ENCODE measurements at regions of chr16 and their contacts with region 1.

Region 1: GRCh38 chr16:26430618-26431017 is 636.1 kb upstream of the C16orf82 start:
- DNase-seq: no peak
- ATAC-seq: no peak
- H3K4me3 ChIP-seq: no peak overlapping the region
- H3K27ac ChIP-seq: no peak overlapping the region
- H3K4me1 ChIP-seq: no peaks in the 10 kb centered on the region
- H3K27me3 ChIP-seq: no peaks in the 10 kb centered on the region
- CTCF ChIP-seq: no peak

Region 2: GRCh38 chr16:26475596-26475995 is 45.0 kb after region 1 on chr16:
- intact Hi-C with region 1: loop called in 1 of 2 experiments (anchors 5 kb)
- DNase-seq: no peak
- ATAC-seq: no peak
- H3K4me3 ChIP-seq: no peak overlapping the region
- H3K27ac ChIP-seq: no peak overlapping the region
- H3K4me1 ChIP-seq: no peaks in the 10 kb centered on the region
- H3K27me3 ChIP-seq: no peaks in the 10 kb centered on the region
- CTCF ChIP-seq: no peak